ENCODE measurements at regions of chr6 and their contacts with region 1.

Region 1: GRCh38 chr6:31399589-31400466 is 3.6 kb upstream of the MICA start:
- DNase-seq: peak; percentile 62

Region 2: DNA sequence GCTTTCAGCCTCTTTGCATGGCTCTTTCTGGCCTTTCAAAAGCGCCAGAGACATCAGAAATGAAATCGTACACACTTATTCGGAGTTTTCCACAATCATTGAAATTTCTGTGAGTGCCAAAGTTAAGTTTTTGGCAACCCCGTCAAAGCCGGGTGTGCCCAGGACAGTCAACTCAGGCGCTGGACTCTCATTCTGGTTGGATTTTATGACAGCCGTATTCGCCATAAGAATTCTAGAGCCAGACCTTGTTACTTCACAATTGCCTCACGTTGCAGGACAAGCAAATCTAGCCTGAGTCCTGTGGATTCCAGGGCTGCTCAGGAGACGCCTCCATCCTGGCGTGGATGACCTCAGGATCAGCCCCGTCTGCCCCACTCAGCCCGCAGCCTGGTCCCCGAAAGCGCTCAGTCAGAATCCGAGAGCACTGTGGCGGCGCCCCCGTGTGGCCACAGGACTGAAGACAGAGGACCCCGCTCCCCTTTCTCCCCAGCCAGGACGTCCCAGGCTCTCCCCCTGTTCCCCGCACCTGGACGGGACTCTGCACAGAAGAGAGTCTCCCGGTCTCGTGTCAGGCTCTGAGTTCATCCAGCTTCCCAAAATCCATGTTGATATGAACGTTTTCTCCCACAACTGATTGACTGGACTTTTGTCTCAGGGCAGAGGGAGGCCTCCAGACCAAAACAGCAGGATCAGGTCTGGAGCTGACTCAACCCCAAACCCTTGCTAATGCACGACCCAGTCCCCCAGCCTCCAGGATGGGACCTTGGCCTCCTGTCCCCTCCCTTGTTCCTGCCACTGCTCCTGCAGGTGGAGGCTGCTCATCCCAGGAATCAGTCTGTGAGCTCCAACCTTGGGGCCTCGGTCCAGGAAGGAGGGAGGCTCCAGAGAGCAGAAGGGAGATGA is 41.8 kb after region 1 on chr6:
- CTCF ChIA-PET with region 1: interaction called, 17 read pairs
- POLR2A ChIA-PET with region 1: interaction called, 9 read pairs
- DNase-seq: peak; percentile 72

Measured in HEK293T (cell line).